Calu3 (cell line): ENCODE measurements at regions of chr18 and their contacts with region 1.

Region 1: DNA sequence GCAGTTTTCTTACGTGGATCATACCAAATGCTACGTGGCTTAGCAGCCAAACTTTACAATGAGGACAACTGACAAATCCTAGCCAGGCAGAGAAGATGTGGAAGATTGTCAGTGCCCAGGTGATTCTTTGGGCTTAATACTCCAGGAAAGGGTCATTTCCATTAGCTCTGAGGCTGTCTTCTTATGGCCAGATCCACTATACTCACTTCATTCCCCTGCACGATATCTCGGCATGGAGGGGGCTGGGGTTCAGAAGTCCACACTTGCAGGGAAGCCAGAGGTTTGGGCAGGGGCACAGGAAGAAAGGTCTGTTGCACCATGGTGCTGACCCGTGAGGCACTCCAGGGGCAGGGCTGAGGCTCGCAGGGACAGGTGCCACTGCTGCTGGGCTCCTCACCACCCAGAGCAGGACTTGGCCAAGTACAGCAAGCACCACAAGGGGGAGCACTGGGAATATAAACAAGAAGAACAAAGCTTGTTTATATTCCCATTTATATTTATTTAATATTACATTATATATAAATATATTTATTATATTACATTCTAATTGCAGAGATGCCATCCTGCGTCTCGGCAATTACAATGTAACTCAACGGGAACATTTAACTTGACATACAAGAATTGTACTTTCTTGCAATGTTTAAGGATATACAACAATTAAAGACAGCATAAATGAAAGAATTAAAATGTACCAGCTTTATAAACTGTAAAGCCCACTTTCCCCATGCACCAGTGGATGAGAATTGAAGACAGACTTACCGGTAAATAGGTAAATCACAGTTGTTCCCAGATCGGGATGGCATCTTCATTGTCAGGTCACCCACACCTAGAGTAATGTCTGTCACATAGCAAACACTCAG is 27.2 kb downstream of the CLUL1 start:
- DNase-seq: peak; percentile 84
- H3K4me3 Mint-ChIP-seq: no peak overlapping the region
- H3K27ac Mint-ChIP-seq: no peak overlapping the region
- H3K4me1 Mint-ChIP-seq: no peaks in the 10 kb centered on the region
- H3K27me3 Mint-ChIP-seq: no peaks in the 10 kb centered on the region
- CTCF ChIP-seq: peak; percentile 67

Region 2: GRCh38 chr18:712401-713134 is 88.6 kb after region 1 on chr18 and contains the start of gene ENOSF1:
- CTCF ChIA-PET with region 1: interaction called, 13 read pairs
- intact Hi-C with region 1: no loop called
- DNase-seq: peak; percentile 96
- H3K4me3 Mint-ChIP-seq: peak within 1 kb of the TSS; percentile 68
- H3K27ac Mint-ChIP-seq: peak within 1 kb of the TSS; percentile 32
- H3K4me1 Mint-ChIP-seq: peaks cover 13% of the 10 kb centered on the region
- H3K27me3 Mint-ChIP-seq: no peaks in the 10 kb centered on the region
- CTCF ChIP-seq: peak; percentile 91
- total RNA-seq, gene ENOSF1: 88.5 and 102 TPM in 2 replicates

Region 3: DNA sequence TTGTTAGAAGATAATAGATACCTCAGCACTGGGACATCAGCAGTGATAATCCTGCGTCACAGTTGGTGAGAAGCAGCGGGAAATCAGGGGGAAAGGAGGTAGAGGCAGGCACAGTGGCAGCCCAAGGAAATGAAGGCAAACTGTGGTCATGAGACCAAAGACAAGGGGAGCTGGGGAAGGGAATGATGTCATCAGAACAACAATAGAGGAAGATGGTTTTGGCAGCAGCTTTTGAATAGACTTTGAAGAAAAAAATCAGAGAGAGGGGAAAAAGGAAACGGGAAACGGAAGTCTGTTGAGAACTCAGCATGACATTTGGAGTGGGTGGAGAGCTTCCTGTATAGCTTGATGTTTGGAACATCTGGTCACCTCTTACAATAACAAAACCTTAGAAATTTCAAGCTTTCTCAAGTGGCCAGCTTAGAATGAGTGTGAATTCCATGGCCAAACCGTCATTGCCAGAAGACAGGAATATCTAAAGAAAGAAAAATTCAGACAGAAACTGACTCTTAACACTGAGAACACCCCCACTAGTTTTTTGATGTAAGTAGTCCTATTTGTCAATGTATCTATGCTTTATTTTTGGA is 206.4 kb after region 1 on chr18:
- CTCF ChIA-PET with region 1: interaction called, 28 read pairs
- intact Hi-C with region 1: loop called (anchors 2 kb)
- DNase-seq: no peak
- H3K4me3 Mint-ChIP-seq: no peak overlapping the region
- H3K27ac Mint-ChIP-seq: no peak overlapping the region
- H3K4me1 Mint-ChIP-seq: peaks cover 22% of the 10 kb centered on the region
- H3K27me3 Mint-ChIP-seq: peaks cover 13% of the 10 kb centered on the region
- CTCF ChIP-seq: no peak